ENCODE measurements at regions of chr6 and their contacts with region 1.

Region 1: DNA sequence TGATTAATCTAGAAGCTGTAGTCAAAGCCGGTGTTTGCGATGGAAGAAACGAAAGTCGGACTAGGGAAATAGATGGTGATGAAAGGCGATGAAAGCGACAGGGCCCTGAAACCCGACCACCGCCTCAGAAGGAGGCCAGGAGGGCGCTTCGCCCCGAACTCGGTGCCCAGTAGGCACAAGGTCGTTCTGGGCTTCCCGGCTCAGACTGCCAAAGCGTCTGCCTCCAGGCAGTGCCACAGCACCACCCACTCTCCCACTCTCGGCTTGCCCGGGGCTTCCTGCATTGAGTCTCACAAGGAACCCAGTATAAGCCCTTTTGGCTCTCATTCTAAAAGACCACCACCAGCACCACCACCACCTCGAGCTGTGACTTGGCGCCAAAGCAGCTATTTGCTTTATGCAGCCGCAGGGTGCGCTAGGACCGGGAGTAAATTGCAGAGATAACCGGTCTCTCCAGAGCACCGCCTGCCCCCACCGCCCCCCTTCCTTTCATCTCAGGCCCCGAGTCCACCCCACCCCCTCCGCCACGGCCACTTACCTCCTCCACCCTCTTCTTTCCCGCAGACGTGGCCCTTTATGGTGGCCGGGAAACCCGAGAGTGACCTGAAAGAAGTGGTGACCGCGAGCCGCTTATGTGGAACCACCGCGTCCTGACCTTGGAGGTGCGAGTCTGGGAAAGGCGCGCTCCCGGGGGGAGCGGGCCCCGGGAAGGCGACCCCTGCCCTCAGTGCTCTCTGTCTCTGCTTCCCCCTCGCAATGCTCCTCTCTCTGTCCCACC is 2.4 kb downstream of the TCF21 start:
- DNase-seq: peak; percentile 72
- ATAC-seq: no peak

Region 2: GRCh38 chr6:133768656-133769295 is 122.6 kb before region 1 on chr6:
- intact Hi-C with region 1: loop called (anchors 5 kb)
- DNase-seq: peak; percentile 69
- ATAC-seq: no peak

Region 3: DNA sequence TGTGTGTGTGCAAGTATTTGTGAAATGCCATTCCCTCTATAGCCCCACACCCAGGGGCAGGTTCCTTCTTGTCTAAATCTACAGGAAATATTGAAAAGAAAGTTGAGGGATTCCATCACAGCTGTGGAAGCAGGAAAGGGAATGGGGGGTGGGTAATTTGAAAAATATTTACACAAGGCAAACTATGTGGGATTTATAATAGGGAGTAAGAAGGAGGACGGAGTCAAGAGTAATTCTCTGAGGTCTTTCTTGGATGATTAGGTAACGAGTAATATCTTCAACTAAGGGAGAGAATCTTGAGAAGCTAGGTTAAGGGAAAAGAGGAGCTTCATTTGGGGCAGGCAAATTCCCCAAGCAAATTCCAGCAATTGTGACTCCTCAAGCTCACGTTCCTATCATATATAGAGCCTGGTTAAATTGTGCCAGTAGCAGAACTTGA is 540.1 kb after region 1 on chr6:
- intact Hi-C with region 1: no loop called
- DNase-seq: no peak
- ATAC-seq: no peak

Measured in Right ventricle myocardium inferior (tissue), 1 donor.